Activated CD4-positive, alpha-beta T cell treated with anti-CD3 and anti-CD28 coated beads, Interleukin-2, amount 10 ng/mL, durations not matched to agents 24 days and 14 days (primary cell): ENCODE measurements at regions of chr19 and their contacts with region 1.

Region 1: DNA sequence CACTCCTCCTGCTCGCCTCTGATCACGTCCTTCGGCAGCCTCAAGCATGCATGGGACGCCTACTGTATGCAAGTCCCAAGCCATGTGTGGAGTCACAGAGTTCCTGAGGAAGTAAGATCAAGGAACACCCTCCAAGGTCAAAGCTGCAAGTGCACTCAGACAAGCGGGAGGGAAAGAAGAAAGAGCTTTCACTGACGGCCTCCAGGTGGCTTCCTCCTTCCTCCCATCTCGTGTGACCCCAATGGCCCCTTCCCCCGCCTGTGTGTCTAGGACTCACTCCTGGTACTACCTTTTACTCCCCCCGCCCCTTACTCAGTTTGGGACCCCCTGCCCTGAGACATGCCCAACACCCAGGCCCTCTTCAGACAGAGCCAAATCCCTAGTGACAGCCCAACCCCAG is 6.0 kb downstream of the HAUS8 start:
- DNase-seq: no peak
- H3K4me3 Mint-ChIP-seq: no peak overlapping the region
- H3K27ac Mint-ChIP-seq: no peak overlapping the region
- H3K4me1 Mint-ChIP-seq: peaks cover 44% of the 10 kb centered on the region
- H3K27me3 Mint-ChIP-seq: no peaks in the 10 kb centered on the region

Region 2: DNA sequence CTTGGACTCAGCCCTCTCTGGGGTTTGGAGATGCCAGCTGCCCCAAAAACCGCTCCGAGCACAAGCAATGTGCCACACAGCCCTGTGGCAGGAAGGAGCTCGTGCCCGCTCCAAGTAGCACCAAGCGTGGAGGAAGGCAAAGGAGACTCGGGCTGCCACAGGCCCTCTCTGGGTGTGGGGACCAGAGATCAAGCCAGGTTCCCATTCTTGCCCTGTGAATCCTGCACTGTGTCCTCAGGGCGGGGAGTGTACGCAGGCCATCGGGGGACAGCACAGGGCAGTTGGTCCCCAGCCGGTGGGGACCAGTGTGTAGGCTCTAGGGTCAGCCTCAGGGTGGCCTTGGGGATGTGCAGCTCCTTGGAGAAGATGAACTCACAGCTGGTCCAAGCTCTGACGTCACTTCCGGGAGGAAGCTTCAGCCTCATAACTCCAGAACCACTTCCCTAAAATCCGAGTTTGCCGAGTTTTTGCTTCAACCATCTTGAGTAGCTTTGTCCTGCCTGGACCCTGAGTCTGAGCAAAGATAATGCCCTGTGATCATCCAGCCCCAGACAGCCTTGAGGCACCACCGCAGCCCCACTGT is 33.3 kb before region 1 on chr19:
- intact Hi-C with region 1: no loop called
- DNase-seq: no peak
- H3K4me3 Mint-ChIP-seq: no peak overlapping the region
- H3K27ac Mint-ChIP-seq: no peak overlapping the region
- H3K4me1 Mint-ChIP-seq: no peaks in the 10 kb centered on the region
- H3K27me3 Mint-ChIP-seq: peaks cover 3% of the 10 kb centered on the region

Region 3: GRCh38 chr19:17183858-17184321 is 114.7 kb after region 1 on chr19:
- intact Hi-C with region 1: loop called (anchors 1 kb)
- DNase-seq: peak; percentile 75
- H3K4me3 Mint-ChIP-seq: peak overlapping the region; percentile 89
- H3K27ac Mint-ChIP-seq: peak overlapping the region; percentile 98
- H3K4me1 Mint-ChIP-seq: peaks cover 21% of the 10 kb centered on the region
- H3K27me3 Mint-ChIP-seq: no peaks in the 10 kb centered on the region